Breast epithelium (tissue), 4 donors: ENCODE measurements at regions of chr13 and their contacts with region 1.

Region 1: GRCh38 chr13:36919833-36920615 is at the start of gene SMAD9:
- DNase-seq: peak; percentile 30 to 61
- H3K4me3 ChIP-seq: peak within 1 kb of the TSS; percentile 68 to 85 (median 70)
- H3K27ac ChIP-seq: peak within 1 kb of the TSS; percentile 29 to 70
- H3K4me1 ChIP-seq: no peaks in the 10 kb centered on the region
- H3K27me3 ChIP-seq: no peaks in the 10 kb centered on the region
- CTCF ChIP-seq: no peak
- POLR2A ChIP-seq: no peak
- total RNA-seq, gene SMAD9: 5.3 to 7.5 (median 5.9) TPM

Region 2: DNA sequence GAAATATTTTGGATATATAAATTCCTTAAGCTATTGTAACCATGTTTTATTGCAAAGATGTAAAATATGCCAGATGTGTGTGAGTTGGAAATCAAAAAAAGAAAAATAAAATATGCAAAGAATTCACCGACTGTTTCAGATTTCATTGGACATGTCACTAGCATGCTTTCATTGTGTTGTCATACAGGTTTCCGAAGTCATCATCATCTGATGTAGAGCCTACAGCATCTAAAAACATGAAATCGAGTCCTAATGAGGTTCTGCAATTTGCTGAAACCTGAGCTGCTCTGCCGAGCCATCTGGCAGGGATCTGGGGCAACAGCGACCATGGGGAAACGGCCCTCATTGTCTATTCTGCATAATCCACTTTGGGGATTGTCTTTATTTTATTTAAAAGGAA is 1247.4 kb before region 1 on chr13:
- intact Hi-C with region 1: loop called (anchors 5 kb)
- DNase-seq: no peak
- H3K4me3 ChIP-seq: no peak overlapping the region
- H3K27ac ChIP-seq: no peak overlapping the region
- H3K4me1 ChIP-seq: no peaks in the 10 kb centered on the region
- H3K27me3 ChIP-seq: no peaks in the 10 kb centered on the region
- CTCF ChIP-seq: no peak
- POLR2A ChIP-seq: no peak

Region 3: GRCh38 chr13:37769078-37769477 is 849.1 kb after region 1 on chr13:
- intact Hi-C with region 1: no loop called
- DNase-seq: no peak
- H3K4me3 ChIP-seq: no peak overlapping the region
- H3K27ac ChIP-seq: no peak overlapping the region
- H3K4me1 ChIP-seq: no peaks in the 10 kb centered on the region
- H3K27me3 ChIP-seq: no peaks in the 10 kb centered on the region
- CTCF ChIP-seq: no peak
- POLR2A ChIP-seq: no peak